CD4-positive, alpha-beta T cell (primary cell): ENCODE measurements at regions of chr16 and their contacts with region 1.

Region 1: DNA sequence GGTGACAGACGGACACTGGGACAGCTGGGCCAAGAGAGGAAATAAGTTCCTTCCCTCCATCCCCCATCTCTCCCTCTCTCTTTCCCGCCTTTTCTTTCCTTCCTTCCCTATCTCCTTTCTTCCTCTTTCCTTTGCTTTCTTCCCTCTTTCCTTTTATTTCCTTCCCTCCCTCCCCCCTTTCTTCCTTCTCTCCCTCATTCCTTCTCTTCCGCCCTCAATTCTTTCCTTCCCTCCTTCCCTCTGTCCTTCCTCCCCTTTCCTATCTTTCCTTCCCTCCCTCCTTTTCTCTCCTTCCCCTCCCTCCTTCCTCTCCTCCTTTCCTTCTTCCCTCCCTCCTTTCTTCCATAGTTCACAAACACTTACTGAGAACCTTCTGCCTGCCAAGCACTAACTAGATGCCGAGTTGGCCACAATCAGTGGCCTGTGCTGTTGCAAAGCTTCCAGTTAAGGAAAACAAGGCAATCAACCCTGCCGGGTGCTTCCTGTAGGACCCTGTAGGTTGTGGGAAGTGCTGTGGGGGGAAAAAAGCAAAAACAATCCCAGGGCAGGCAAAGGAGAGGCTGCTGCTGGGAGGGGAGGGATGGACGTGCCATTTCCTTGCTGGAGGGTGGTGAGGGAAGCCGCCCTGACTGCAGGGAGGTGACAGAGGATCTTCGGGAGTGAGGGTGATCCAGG is 31.7 kb downstream of the ABCC6 start:
- DNase-seq: no peak
- ATAC-seq: no peak
- H3K4me3 ChIP-seq: no peak overlapping the region
- H3K4me3 Mint-ChIP-seq: no peak overlapping the region
- H3K27ac ChIP-seq: no peak overlapping the region
- H3K27ac Mint-ChIP-seq: no peak overlapping the region
- H3K4me1 ChIP-seq: no peaks in the 10 kb centered on the region
- H3K4me1 Mint-ChIP-seq: no peaks in the 10 kb centered on the region
- H3K27me3 ChIP-seq: peaks cover 0 to 3% of the 10 kb centered on the region in 2 experiments
- H3K27me3 Mint-ChIP-seq: peaks cover 8% of the 10 kb centered on the region
- CTCF ChIP-seq: no peak

Region 2: GRCh38 chr16:15765880-15766279 is 425.8 kb before region 1 on chr16:
- CTCF ChIA-PET with region 1: no interaction called
- POLR2A ChIA-PET with region 1: no interaction called
- intact Hi-C with region 1: loop called (anchors 5 to 10 kb)
- DNase-seq: peak in 6 of 14 experiments; percentile 5 to 57 (median 30)
- ATAC-seq: peak; percentile 57
- H3K4me3 ChIP-seq: no peak overlapping the region
- H3K4me3 Mint-ChIP-seq: no peak overlapping the region
- H3K27ac ChIP-seq: no peak overlapping the region
- H3K27ac Mint-ChIP-seq: no peak overlapping the region
- H3K4me1 ChIP-seq: no peaks in the 10 kb centered on the region
- H3K4me1 Mint-ChIP-seq: no peaks in the 10 kb centered on the region
- H3K27me3 ChIP-seq: peaks cover 7 to 8% of the 10 kb centered on the region in 2 experiments
- H3K27me3 Mint-ChIP-seq: peaks cover 43% of the 10 kb centered on the region
- CTCF ChIP-seq: peak; percentile 54